ENCODE measurements at regions of chr18 and their contacts with region 1.

Region 1: GRCh38 chr18:6920099-6920899 is 190.8 kb downstream of the ARHGAP28 start:
- DNase-seq: peak in 6 of 10 donors; percentile 24 to 79 (median 41)

Region 2: GRCh38 chr18:6807515-6808257 is 112.6 kb before region 1 on chr18:
- intact Hi-C with region 1: no loop called
- DNase-seq: no peak

Region 3: DNA sequence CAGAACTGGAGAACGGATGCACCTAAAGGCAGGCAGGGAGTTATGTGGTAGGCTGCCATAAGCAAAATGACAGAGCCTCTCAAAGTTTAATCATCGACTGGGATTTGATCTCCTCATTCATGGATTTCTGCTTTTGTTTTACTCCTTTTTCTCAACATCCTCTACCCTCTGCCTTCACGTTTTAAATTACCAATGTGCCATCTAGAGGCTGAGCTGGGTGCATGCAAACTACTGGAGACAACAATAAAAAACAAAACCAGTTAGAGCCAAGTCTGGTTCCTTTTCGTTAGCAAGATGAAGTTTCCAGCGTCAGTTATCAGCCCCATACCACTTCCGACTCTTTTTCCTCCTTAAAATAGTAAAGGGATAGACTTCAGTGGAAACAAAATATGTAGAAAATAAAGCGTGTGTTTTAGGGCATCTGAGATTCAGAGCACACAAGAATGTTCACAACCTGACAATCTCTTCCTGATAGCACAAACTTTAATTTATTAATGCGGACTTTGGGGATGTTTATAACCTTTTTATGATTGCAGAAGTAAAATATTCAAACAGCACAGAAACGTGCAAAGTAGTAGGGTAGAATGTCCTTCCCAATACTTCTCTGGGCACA is 80.3 kb after region 1 on chr18:
- intact Hi-C with region 1: loop called (anchors 5 kb)
- DNase-seq: no peak

Region 4: DNA sequence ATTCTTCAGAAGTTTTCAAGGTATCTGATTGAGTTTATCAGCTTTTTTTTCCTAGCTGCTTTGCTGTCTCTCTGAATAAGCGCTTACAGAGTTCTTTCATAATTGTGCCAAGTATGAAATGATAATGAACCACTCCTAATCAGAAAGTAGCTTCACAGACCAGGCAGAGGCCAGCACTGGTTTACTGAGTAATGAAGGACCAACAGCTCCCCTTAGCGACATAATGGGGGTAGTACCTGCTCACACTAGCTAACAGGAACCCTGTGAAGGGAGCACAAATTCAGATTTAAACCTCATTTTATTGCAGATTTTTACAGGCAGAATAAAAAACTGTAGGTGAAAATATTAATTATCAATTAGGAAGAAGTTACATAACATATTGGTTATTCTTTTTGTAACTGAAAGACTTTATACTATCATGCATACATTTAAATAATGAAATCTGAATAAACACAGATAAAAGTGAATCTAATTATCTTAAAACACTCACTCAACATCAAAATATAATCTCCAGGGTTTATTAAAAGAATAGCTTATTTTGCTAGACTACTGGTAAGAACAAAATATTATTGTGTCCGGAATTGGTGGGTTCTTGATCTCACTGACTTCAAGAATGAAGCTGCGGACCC is 256.9 kb after region 1 on chr18:
- intact Hi-C with region 1: loop called (anchors 10 kb)
- DNase-seq: peak in 3 of 10 donors; percentile 17 to 34 (median 19)